Pancreas (tissue), 10 donors: ENCODE measurements at regions of chr15 and their contacts with region 1.

Region 1: DNA sequence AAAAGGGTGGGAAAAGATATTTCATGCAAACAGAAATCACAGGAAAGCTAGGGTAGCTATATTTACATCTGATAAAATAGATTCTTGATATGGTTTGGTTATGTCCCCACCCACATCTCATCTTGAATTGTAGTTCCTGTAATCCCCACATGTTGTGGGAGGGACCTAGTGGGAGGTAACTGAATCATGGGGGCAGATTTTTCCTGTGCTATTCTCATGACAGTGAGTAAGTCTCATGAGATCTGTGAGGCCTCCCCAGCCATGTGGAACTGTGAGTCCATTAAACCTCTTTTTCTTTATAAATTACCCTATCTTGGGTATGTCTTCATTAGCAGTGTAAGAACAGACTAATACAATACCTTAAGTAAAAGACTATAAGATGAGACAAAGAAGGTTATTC is 558.1 kb downstream of the RSL24D1 start:
- DNase-seq: no peak
- ATAC-seq: no peak
- H3K4me3 ChIP-seq: no peak overlapping the region
- H3K27ac ChIP-seq: no peak overlapping the region
- H3K4me1 ChIP-seq: no peaks in the 10 kb centered on the region
- H3K27me3 ChIP-seq: no peaks in the 10 kb centered on the region
- CTCF ChIP-seq: no peak

Region 2: GRCh38 chr15:54515664-54516582 is 122.7 kb before region 1 on chr15:
- intact Hi-C with region 1: no loop called
- DNase-seq: no peak
- ATAC-seq: no peak
- H3K4me3 ChIP-seq: no peak overlapping the region
- H3K27ac ChIP-seq: no peak overlapping the region
- H3K4me1 ChIP-seq: no peaks in the 10 kb centered on the region
- H3K27me3 ChIP-seq: peaks cover 0 to 9% (median 0%) of the 10 kb centered on the region in 4 donors
- CTCF ChIP-seq: no peak

Region 3: GRCh38 chr15:54528021-54528420 is 110.6 kb before region 1 on chr15:
- intact Hi-C with region 1: no loop called
- DNase-seq: no peak
- ATAC-seq: no peak
- H3K4me3 ChIP-seq: no peak overlapping the region
- H3K27ac ChIP-seq: no peak overlapping the region
- H3K4me1 ChIP-seq: no peaks in the 10 kb centered on the region
- H3K27me3 ChIP-seq: no peaks in the 10 kb centered on the region
- CTCF ChIP-seq: no peak

Region 4: GRCh38 chr15:54577476-54578250 is 61.0 kb before region 1 on chr15:
- intact Hi-C with region 1: loop called in 1 of 3 experiments (anchors 10 kb)
- DNase-seq: no peak
- ATAC-seq: no peak
- H3K4me3 ChIP-seq: no peak overlapping the region
- H3K27ac ChIP-seq: no peak overlapping the region
- H3K4me1 ChIP-seq: no peaks in the 10 kb centered on the region
- H3K27me3 ChIP-seq: no peaks in the 10 kb centered on the region
- CTCF ChIP-seq: no peak

Region 5: GRCh38 chr15:54850132-54850531 is 211.5 kb after region 1 on chr15:
- intact Hi-C with region 1: no loop called
- DNase-seq: no peak
- ATAC-seq: no peak
- H3K4me3 ChIP-seq: no peak overlapping the region
- H3K27ac ChIP-seq: no peak overlapping the region
- H3K4me1 ChIP-seq: no peaks in the 10 kb centered on the region
- H3K27me3 ChIP-seq: no peaks in the 10 kb centered on the region
- CTCF ChIP-seq: no peak

Region 6: DNA sequence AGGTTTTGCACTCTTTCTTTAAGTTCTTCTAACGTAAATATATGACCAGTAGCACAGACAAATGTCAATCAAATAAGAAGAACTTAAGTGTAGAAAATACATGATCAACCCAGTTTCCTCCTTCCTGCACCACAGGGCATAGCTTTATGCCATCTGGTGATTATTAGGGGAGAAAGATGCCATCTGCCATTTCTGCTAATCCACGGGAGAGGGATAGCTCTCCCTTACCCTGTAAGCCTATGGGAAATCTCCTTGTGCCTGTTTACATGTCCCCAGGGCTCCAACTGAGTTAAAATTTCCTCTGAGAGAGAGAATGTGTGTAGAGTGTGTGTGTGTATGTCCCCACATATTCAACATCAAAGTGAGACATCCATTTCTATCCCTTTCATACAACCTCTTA is 422.2 kb after region 1 on chr15:
- intact Hi-C with region 1: no loop called
- DNase-seq: no peak
- ATAC-seq: no peak
- H3K4me3 ChIP-seq: no peak overlapping the region
- H3K27ac ChIP-seq: no peak overlapping the region
- H3K4me1 ChIP-seq: no peaks in the 10 kb centered on the region
- H3K27me3 ChIP-seq: no peaks in the 10 kb centered on the region
- CTCF ChIP-seq: no peak